Head of caudate nucleus (tissue), 42 donors: ENCODE measurements at regions of chr6 and their contacts with region 1.

Region 1: DNA sequence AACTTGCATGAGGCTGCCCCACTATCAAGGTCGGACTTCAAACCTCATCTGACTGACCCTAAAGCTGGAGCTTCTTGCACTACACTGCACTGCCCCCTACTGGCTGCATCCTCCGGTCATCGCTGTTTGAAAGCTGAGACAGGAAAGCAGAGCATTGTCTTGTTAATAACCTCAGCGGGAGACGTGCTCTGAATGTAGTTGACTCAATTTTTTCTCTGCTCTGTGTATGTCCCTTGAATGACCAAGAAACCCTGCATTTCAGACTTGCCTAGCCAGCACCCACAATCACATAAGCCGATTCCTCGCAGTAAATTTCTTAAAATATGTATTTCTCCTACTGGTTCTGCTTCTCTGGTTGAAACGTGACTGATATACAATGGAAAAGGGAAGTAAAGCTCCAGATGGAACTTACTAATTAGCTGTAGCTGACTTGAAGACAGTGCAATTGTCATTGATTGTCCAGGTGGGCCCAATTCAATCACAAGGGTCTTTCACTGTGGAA is 27.8 kb downstream of the TCF21 start:
- DNase-seq: peak; percentile 78 to 97 (median 93)

Region 2: GRCh38 chr6:133568970-133569889 is 347.5 kb before region 1 on chr6:
- intact Hi-C with region 1: loop called (anchors 2 kb)
- DNase-seq: peak; percentile 19 to 87 (median 55)

Region 3: DNA sequence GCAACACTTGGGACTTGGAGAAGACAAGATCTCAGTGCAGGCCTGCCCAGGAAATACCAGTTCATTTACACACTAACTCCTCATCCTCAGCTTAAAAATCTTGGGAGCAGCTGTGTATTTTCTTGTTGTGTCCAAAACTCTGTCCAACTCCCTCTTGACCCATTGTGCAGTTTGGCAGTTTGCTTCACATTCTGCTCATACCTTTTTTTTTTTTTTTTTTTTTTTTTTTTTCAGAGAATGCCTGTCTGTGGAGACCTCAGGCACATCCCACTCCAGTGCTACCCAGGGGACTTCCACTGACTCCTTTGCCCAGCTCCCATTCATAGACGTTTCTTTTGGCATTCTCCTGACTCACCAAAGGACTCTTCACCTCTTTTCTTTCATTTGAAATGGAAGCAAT is 293.6 kb before region 1 on chr6:
- intact Hi-C with region 1: no loop called
- DNase-seq: no peak